Heart left ventricle (tissue), 16 donors: ENCODE measurements at regions of chr6 and their contacts with region 1.

Region 1: DNA sequence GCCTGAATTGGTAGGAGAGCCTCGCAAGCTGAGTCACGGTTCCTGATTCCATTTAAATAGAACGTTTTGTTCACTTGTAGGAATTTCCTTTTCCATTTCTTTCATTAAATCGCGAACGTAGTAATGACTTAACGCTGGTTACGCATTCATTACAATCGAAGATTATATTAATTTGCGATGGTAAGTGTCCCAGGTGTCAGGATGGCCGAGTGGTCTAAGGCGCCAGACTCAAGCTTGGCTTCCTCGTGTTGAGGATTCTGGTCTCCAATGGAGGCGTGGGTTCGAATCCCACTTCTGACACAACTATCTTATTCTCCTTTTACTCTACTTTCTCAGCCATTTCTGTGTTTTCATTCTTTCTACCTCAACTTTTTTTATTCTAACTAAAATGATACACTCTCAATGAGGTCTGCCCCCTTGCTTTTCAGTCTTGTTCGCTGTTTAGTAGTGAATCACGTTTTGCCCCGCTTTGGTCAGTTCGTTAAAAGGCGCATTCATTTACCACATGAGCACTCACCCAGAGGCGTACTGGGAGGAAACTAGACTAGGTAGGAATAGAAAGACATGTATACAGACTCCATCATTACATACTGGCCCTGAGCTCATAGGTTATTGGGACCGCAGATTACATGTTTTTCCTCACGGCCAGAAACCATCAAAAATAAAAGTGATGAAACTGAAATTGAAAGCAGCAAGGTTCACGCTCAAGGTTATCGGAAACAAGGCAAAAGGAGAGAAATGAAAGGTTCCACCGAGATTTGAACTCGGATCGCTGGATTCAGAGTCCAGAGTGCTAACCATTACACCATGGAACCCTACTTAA is 17.3 kb upstream of the TRIM27 start:
- DNase-seq: peak in 4 of 5 donors; percentile 72 to 83 (median 80)
- ATAC-seq: peak; percentile 74 to 92 (median 82)
- H3K4me3 ChIP-seq: peak overlapping the region; percentile 42 to 70 (median 64)
- H3K27ac ChIP-seq: peak overlapping the region; percentile 36 to 85 (median 69)
- H3K4me1 ChIP-seq: peaks cover 0 to 33% (median 8%) of the 10 kb centered on the region in 12 donors
- H3K27me3 ChIP-seq: no peaks in the 10 kb centered on the region
- CTCF ChIP-seq: no peak
- POLR2A ChIP-seq: no peak

Region 2: DNA sequence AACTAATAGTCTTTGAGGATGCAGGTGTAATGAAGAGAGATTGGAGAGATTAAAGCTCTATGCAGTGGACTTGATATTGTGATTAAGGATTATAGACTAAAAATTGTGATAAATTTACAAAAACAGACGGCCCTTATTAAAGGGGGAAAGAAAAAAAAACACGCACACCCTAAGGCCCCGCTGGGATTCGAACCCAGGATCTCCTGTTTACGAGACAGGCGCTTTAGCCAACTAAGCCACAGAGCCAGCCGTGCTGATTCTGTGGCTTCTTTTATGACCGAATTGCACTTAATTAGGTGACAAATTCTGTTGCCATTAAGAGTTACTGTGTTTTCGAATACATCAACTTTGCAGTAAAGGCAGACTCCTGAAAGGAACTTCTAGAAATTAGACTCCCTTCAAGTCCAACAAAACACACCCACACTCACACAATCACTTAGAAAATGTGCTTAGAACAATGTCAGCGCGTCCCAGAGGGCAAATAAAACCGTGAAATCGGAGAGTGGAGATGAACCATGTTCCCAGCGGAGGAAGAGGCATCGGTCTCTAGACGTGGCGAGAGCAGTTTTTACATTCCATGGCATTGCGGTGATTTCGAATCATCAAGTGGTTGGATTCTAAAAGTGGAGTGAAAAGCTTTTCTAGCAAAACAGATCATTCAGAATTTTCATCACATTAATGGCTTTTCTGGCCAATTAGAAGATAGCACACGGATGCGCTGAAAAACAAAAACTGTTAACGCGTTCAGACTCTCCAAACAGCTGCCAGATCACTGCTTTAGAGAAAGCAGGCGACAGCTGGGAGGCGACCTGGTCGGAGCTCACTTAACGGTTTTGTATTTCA is 292.8 kb before region 1 on chr6:
- intact Hi-C with region 1: no loop called
- DNase-seq: peak in 2 of 5 donors; percentile 34 to 35
- ATAC-seq: peak in 2 of 4 donors; percentile 42 to 49
- H3K4me3 ChIP-seq: peak overlapping the region in 11 of 12 donors; percentile 3 to 57 (median 46)
- H3K27ac ChIP-seq: no peak overlapping the region
- H3K4me1 ChIP-seq: peaks cover 0 to 13% (median 0%) of the 10 kb centered on the region in 12 donors
- H3K27me3 ChIP-seq: peaks cover 0 to 56% (median 7%) of the 10 kb centered on the region in 9 donors
- CTCF ChIP-seq: no peak
- POLR2A ChIP-seq: no peak

Region 3: GRCh38 chr6:28863604-28864320 is 77.3 kb before region 1 on chr6:
- intact Hi-C with region 1: loop called in 2 of 10 experiments (anchors 5 to 10 kb)
- DNase-seq: peak; percentile 55 to 78 (median 59)
- ATAC-seq: peak; percentile 79 to 90 (median 88)
- H3K4me3 ChIP-seq: peak overlapping the region; percentile 42 to 93 (median 78)
- H3K27ac ChIP-seq: peak overlapping the region in 7 of 12 donors; percentile 0 to 77 (median 41)
- H3K4me1 ChIP-seq: peaks cover 0 to 19% (median 7%) of the 10 kb centered on the region in 12 donors
- H3K27me3 ChIP-seq: peaks cover 0 to 10% (median 0%) of the 10 kb centered on the region in 9 donors
- CTCF ChIP-seq: no peak
- POLR2A ChIP-seq: no peak

Region 4: GRCh38 chr6:28923318-28924102 is 17.6 kb before region 1 on chr6 and contains the start of gene TRIM27:
- intact Hi-C with region 1: loop called in 2 of 10 experiments (anchors 1 to 2 kb)
- DNase-seq: peak; percentile 93 to 96 (median 95)
- ATAC-seq: peak; percentile 94 to 98 (median 98)
- H3K4me3 ChIP-seq: peak within 1 kb of the TSS; percentile 85 to 100 (median 90)
- H3K27ac ChIP-seq: peak within 1 kb of the TSS; percentile 67 to 98 (median 96)
- H3K4me1 ChIP-seq: peaks cover 0 to 46% (median 19%) of the 10 kb centered on the region in 12 donors
- H3K27me3 ChIP-seq: no peaks in the 10 kb centered on the region
- CTCF ChIP-seq: peak in 2 of 12 donors; percentile 14 to 20
- POLR2A ChIP-seq: peak in 1 of 2 donors; percentile 91
- total RNA-seq, gene TRIM27: 14.7 to 37.7 (median 19.8) TPM

Region 5: GRCh38 chr6:28996844-28997510 is 55.9 kb after region 1 on chr6:
- intact Hi-C with region 1: no loop called
- DNase-seq: no peak
- ATAC-seq: no peak
- H3K4me3 ChIP-seq: no peak overlapping the region
- H3K27ac ChIP-seq: no peak overlapping the region
- H3K4me1 ChIP-seq: no peaks in the 10 kb centered on the region
- H3K27me3 ChIP-seq: peaks cover 0 to 18% (median 0%) of the 10 kb centered on the region in 9 donors
- CTCF ChIP-seq: no peak
- POLR2A ChIP-seq: no peak